ENCODE measurements at regions of chr2 and their contacts with region 1.

Region 1: GRCh38 chr2:212536817-212537725 is 1.5 kb downstream of the ERBB4 start:
- DNase-seq: peak in 9 of 10 donors; percentile 14 to 87 (median 34)

Region 2: GRCh38 chr2:212364112-212364985 is 172.7 kb before region 1 on chr2:
- intact Hi-C with region 1: loop called (anchors 5 kb)
- DNase-seq: no peak

Region 3: GRCh38 chr2:212414767-212415211 is 122.3 kb before region 1 on chr2:
- intact Hi-C with region 1: loop called (anchors 10 kb)
- DNase-seq: no peak

Region 4: GRCh38 chr2:212766919-212767556 is 230.0 kb after region 1 on chr2:
- intact Hi-C with region 1: no loop called
- DNase-seq: no peak